Activated CD8-positive, alpha-beta T cell treated with anti-CD3 and anti-CD28 coated beads, Interleukin-2, amount 10 ng/mL, durations not matched to agents 7 days and 5 days (primary cell): ENCODE measurements at regions of chr11 and their contacts with region 1.

Region 1: DNA sequence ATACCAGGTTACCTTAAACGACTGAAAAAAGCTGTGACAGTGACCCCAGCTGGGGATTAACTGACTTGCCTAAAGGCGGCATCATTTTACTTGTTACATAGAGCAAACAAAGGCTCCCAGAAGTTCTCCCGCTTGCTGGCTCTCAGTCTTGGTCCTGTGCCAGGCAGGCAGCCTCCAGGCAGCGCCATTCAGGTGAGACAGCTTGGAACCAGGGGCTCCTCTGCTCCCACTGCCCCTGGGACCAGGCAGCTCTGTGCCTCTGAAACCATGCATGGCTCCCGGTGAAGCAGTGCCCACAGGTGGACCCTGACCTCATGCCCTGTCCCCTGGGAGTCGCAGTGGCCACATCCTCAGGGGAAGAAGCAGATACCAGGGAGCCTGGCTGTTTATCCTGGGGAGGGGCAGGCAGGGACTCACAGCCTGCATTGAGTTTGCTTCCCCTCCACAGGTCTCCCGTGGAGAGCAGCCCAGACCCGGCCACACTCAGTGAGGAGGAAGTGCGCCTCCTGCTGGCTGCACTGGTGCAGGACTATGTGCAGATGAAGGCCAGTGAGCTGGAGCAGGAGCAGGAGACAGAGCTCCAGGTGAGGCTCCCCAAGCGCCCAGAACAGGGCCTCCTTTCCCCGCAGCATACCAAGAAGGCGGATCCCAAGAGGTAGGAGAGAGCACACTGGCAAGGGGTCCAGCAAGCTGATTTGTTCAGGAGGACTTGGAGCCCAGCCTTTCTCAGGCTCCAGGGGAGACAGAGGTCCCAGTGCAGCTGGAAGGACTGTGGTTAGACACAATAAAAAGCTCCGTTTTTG is 15.6 kb upstream of the CYP2R1 start:
- DNase-seq: peak; percentile 89
- ATAC-seq: peak; percentile 68
- H3K4me3 Mint-ChIP-seq: no peak overlapping the region
- H3K27ac Mint-ChIP-seq: no peak overlapping the region
- H3K4me1 Mint-ChIP-seq: peaks cover 54% of the 10 kb centered on the region
- H3K27me3 Mint-ChIP-seq: no peaks in the 10 kb centered on the region

Region 2: DNA sequence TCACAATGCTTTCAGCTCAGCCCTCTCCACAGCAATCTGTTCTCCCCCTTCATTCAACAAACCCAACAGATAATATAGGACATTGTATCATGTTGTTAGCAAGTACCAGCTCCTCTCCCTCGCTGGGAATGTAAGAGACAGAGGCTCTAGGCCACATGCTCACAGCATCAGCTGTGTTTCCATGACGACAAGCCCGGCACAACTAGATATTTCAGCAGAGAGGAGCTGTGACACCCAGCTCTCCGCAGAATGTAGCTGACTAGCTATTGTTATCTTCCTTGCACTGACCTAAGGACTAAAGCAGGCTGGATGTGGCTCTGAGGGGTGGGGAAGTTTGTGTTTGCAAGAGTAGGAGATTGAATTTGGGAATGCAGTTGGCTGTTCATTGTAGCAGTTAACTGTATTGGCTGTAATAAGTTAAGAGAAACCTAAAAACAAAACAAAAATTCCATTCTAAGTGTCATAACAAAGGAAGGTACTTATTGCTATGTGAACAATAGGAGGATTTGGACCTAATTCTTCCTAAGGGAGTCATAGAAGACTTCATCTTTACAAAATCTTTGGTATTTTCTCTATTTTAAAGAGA is 520.6 kb before region 1 on chr11:
- CTCF ChIA-PET with region 1: no interaction called
- POLR2A ChIA-PET with region 1: no interaction called
- DNase-seq: no peak
- ATAC-seq: no peak
- H3K4me3 Mint-ChIP-seq: no peak overlapping the region
- H3K27ac Mint-ChIP-seq: no peak overlapping the region
- H3K4me1 Mint-ChIP-seq: no peaks in the 10 kb centered on the region
- H3K27me3 Mint-ChIP-seq: peaks cover 13% of the 10 kb centered on the region

Region 3: DNA sequence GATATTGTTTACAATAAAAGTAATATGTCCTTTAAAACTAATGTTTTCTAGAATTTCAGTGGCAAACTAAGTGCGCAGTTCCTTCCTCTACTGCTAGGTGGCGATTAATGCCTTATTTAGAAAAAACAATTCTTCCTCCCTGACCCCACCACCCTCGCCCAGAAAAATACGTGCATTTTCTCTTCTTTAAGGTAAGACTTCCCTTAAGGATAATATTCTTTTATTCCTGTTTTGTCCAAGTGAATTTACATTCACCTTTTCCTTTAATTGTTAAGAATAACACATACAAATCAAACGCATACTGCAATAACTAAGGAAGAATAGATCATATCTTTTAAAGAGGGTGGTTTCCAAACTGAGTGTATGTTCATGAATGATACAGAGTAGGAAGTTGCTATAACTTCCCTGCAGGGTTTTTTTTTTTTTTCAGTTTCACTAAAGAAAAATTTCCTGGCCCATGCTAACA is 370.4 kb before region 1 on chr11:
- CTCF ChIA-PET with region 1: interaction called, 10 read pairs
- POLR2A ChIA-PET with region 1: no interaction called
- DNase-seq: peak; percentile 66
- ATAC-seq: peak; percentile 69
- H3K4me3 Mint-ChIP-seq: peak overlapping the region; percentile 53
- H3K27ac Mint-ChIP-seq: peak overlapping the region; percentile 58
- H3K4me1 Mint-ChIP-seq: peaks cover 36% of the 10 kb centered on the region
- H3K27me3 Mint-ChIP-seq: no peaks in the 10 kb centered on the region

Region 4: GRCh38 chr11:14727746-14728145 is 179.9 kb before region 1 on chr11:
- CTCF ChIA-PET with region 1: interaction called, 13 read pairs
- POLR2A ChIA-PET with region 1: no interaction called
- DNase-seq: no peak
- ATAC-seq: no peak
- H3K4me3 Mint-ChIP-seq: no peak overlapping the region
- H3K27ac Mint-ChIP-seq: no peak overlapping the region
- H3K4me1 Mint-ChIP-seq: peaks cover 54% of the 10 kb centered on the region
- H3K27me3 Mint-ChIP-seq: no peaks in the 10 kb centered on the region

Region 5: DNA sequence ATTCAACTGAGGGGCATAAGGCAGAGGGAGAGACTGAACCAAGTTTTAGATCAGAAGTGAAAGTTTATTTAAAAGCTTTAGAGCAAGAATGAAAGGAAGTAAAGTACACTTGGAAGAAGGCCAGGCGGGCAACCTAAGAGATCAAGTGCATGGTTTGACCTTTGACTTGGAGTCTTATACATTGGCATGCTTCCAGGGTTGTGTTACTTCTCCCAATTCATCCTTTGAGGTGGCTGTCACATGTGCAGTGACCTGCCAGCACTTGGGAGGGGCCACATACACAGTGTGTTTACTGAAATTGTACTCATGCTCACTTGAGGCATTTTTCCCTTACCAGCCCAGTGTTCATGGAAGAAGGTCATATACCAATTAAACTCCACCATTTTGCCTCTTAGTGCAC is 45.9 kb before region 1 on chr11:
- CTCF ChIA-PET with region 1: interaction called, 14 read pairs
- POLR2A ChIA-PET with region 1: no interaction called
- DNase-seq: no peak
- ATAC-seq: no peak
- H3K4me3 Mint-ChIP-seq: no peak overlapping the region
- H3K27ac Mint-ChIP-seq: no peak overlapping the region
- H3K4me1 Mint-ChIP-seq: peaks cover 4% of the 10 kb centered on the region
- H3K27me3 Mint-ChIP-seq: no peaks in the 10 kb centered on the region

Region 6: DNA sequence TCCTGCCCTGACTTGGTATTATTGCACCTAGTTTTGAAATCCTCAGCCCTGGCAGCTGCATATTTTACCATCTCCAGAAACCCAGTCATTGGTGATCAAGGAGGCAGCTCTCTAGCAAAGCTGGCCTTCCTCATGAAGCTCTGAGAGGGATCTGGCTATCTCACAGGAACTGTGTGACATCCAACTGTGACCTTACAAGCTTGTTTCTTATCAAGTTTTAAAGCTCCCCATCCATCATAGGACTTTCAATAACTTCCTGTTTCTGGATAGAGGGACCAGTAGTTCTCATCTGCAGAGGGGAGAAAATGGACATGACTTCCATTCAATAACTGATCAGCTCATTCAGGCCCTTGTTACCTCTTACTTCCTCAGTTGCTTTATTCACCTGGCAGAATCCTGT is 46.3 kb after region 1 on chr11:
- CTCF ChIA-PET with region 1: interaction called, 12 read pairs
- POLR2A ChIA-PET with region 1: no interaction called
- DNase-seq: no peak
- ATAC-seq: no peak
- H3K4me3 Mint-ChIP-seq: no peak overlapping the region
- H3K27ac Mint-ChIP-seq: no peak overlapping the region
- H3K4me1 Mint-ChIP-seq: no peaks in the 10 kb centered on the region
- H3K27me3 Mint-ChIP-seq: peaks cover 3% of the 10 kb centered on the region

Region 7: GRCh38 chr11:15074206-15075161 is 166.9 kb after region 1 on chr11:
- CTCF ChIA-PET with region 1: interaction called, 196 read pairs
- POLR2A ChIA-PET with region 1: interaction called, 3 read pairs
- DNase-seq: peak; percentile 89
- ATAC-seq: peak; percentile 90
- H3K4me3 Mint-ChIP-seq: peak overlapping the region; percentile 69
- H3K27ac Mint-ChIP-seq: no peak overlapping the region
- H3K4me1 Mint-ChIP-seq: peaks cover 23% of the 10 kb centered on the region
- H3K27me3 Mint-ChIP-seq: peaks cover 14% of the 10 kb centered on the region

Region 8: DNA sequence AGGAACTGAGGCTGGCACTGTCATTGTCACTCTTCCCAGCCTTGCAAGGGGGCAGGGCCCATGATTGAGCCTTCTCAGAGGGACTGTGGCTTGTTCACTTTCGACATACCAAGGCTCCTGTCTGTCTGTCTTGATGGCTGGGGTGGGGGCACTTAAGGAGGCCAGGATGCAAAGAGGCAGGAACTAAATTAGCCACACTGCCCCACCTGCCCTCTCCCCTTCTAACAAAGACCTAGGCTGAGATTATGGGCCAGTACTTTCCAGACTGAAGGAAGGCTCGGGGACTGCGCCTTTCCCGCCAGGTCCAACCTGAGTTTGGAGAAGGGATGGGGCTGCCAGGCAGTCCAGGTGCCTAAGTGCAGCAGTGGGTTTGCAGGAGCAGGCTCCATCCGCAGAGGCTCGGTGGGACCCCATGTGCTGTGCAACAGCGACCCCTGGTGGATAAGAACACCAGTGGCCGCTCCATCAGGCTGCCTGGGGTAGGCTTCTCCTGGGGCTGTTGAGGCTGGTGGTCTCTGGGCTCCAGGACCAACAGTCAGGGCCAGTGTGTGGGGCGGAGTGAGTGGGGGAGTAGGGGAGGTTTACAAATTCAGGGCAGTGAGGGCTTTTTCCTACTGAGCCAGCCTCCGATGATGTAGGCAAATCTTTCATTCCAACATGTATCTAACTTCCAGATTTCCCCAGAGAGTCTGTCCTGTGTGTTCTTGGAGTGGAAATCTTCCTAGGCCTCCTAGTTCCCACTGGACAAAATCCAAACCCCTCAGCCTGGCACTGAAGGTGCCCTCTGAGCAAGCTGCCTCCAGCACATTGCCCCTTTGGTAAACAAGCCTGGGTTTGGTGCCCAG is 301.0 kb after region 1 on chr11:
- CTCF ChIA-PET with region 1: interaction called, 73 read pairs
- POLR2A ChIA-PET with region 1: no interaction called
- DNase-seq: peak; percentile 83
- ATAC-seq: peak; percentile 96
- H3K4me3 Mint-ChIP-seq: no peak overlapping the region
- H3K27ac Mint-ChIP-seq: no peak overlapping the region
- H3K4me1 Mint-ChIP-seq: no peaks in the 10 kb centered on the region
- H3K27me3 Mint-ChIP-seq: peaks cover 11% of the 10 kb centered on the region

Region 9: DNA sequence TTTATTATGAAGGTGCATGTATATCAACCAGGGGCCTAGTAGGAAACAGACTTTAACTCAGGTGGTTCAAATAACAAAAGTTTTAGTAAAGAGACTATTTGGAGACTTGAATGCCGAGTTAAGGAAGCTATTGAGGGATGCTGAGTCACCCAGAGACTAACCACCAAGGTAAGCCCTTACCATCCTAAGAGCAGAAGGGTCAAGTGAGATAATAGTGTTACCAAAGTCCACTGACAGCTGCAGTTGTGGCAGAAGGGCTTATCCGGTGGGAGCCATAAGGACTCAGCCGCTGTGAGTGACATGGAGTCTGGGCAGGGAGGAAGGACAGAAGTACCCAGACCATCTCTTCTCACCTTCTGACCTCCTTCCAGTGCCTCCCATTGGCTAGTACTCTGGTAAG is 341.1 kb after region 1 on chr11:
- CTCF ChIA-PET with region 1: no interaction called
- POLR2A ChIA-PET with region 1: no interaction called
- DNase-seq: no peak
- ATAC-seq: no peak
- H3K4me3 Mint-ChIP-seq: no peak overlapping the region
- H3K27ac Mint-ChIP-seq: no peak overlapping the region
- H3K4me1 Mint-ChIP-seq: no peaks in the 10 kb centered on the region
- H3K27me3 Mint-ChIP-seq: peaks cover 10% of the 10 kb centered on the region